ENCODE measurements at regions of chr12 and their contacts with region 1.

Region 1: DNA sequence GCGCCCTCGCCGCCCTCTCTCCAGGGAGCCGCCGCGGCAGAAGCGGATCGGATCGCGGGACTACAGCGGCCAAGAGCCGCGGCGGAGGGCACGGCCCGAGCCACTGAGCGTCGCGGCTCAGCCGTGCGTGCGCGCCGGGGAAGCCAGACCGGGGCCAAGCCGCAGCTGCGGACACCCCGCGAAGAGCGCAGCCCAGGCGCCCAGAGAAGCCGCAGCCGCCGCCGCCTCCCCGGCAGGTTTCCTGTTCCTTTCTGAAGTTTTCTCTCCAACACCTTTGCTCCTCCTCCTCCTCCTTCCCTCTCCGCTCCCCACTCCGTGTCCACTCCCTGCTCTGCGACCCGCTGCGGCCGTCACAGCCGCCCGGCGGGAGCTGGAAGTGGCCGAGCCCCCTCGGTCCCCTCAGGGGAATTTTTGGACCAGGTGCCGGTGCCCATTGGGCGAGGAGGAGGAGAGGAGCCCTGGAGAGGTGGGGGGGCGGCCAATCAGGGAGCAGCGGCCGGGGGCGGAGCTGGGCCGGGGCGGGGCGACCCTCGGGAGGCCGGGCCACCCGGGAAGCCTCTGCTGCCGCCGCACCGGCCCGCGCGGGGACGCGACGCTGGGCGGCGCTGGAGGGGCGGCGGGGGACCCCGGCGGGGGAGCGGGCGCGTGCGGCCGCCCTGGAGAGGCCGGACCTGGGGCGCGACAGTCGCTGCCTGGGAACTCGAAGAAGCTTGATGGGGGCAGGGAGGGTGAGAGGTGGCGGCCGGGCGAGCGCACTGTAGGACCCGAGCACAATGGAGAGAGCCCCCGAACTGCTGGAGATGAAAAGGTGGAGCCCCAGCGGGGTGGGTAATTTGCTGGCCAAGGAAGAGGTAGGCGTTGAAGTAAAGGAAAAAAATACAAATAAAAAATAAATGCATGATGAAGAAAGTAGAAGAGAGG is at the start of gene ITPR2:
- DNase-seq: peak; percentile 97
- ATAC-seq: peak; percentile 91
- H3K4me3 Mint-ChIP-seq: peak within 1 kb of the TSS; percentile 96
- H3K27ac Mint-ChIP-seq: peak within 1 kb of the TSS; percentile 99
- H3K4me1 Mint-ChIP-seq: peaks cover 37% of the 10 kb centered on the region
- H3K27me3 Mint-ChIP-seq: no peaks in the 10 kb centered on the region
- total RNA-seq, gene ITPR2: 27.3 to 28.6 TPM

Region 2: GRCh38 chr12:26113853-26114719 is 719.0 kb before region 1 on chr12:
- CTCF ChIA-PET with region 1: no interaction called
- POLR2A ChIA-PET with region 1: no interaction called
- intact Hi-C with region 1: loop called in 1 of 2 experiments (anchors 2 kb)
- DNase-seq: peak; percentile 87
- ATAC-seq: peak; percentile 88
- H3K4me3 Mint-ChIP-seq: peak overlapping the region; percentile 69
- H3K27ac Mint-ChIP-seq: peak overlapping the region; percentile 25
- H3K4me1 Mint-ChIP-seq: peaks cover 11% of the 10 kb centered on the region
- H3K27me3 Mint-ChIP-seq: peaks cover 37% of the 10 kb centered on the region

Region 3: GRCh38 chr12:26748741-26749431 is 84.2 kb before region 1 on chr12:
- CTCF ChIA-PET with region 1: interaction called, 3 read pairs
- POLR2A ChIA-PET with region 1: interaction called, 11 read pairs
- intact Hi-C with region 1: loop called (anchors 1 to 2 kb)
- DNase-seq: no peak
- ATAC-seq: peak; percentile 70
- H3K4me3 Mint-ChIP-seq: peak overlapping the region; percentile 30
- H3K27ac Mint-ChIP-seq: peak overlapping the region; percentile 83
- H3K4me1 Mint-ChIP-seq: peaks cover 75% of the 10 kb centered on the region
- H3K27me3 Mint-ChIP-seq: no peaks in the 10 kb centered on the region

Region 4: DNA sequence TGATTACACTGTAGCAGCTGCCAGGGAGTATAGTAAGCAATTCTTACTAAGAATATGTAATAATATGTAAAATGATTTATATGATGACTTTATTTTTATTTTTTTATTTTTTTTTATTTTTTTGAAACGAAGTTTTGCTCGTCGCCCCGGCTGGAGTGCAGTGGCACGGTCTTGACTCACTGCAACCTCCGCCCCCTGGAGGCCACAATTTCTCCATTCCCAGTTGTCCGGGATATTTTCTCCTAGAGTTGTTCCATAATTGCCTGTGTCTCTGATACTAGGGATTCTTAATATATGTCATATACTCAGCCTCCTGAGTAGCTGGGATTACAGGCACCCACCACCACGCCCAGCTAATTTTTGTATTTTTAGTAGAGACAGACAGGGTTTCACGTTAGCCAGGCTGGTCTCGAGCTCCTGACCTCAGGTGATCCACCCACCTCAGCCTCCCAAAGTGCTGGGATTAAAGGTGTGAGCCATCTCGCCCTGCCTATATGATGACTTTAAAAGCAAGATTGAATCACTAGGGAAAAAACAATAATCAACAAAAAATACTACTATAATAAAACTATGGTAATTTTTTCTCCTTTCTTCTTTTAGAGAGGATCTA is 12.1 kb after region 1 on chr12:
- CTCF ChIA-PET with region 1: interaction called, 14 read pairs
- POLR2A ChIA-PET with region 1: no interaction called
- intact Hi-C with region 1: no loop called
- DNase-seq: peak; percentile 31
- ATAC-seq: no peak
- H3K4me3 Mint-ChIP-seq: no peak overlapping the region
- H3K27ac Mint-ChIP-seq: no peak overlapping the region
- H3K4me1 Mint-ChIP-seq: peaks cover 15% of the 10 kb centered on the region
- H3K27me3 Mint-ChIP-seq: peaks cover 5% of the 10 kb centered on the region

Region 5: DNA sequence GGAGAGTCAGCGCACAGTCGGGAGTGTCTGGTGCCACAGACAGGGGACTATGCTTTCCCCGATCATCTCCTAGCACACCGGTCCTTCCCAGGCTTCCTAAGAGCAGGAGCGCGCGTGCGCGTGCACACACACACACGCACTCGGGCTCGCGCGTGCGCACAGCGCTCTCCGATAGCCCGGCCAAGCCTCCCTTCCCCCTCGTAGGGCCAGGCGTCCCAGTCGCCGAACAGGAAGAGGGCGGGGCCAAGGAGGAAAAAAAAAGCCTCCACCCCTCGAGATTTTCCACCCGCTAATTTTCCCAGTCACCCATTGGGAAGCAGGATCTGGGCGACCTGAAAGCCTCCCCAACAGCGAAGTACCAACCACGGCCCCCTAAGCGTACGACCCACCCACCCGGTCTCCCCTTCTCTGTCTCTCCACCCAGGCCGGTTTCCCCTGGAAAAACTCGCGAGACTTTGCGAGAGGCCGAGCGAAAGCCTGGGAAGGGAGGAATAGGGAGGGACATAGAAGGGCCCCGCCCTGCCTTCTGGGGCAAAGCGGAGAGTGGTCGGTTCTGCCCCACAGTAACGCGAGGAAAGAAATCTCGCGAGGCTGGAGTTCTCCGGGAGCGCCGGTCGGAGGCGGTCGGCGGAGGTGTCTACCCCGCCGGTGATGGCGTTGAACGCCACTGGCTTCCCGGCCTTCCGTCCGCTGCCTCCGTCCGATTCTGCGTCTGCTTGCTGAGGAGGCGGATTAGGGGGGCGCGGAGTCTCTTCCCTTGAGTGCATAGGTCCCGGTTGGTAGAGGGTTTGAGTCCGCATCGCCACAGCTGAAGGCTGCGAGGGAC is 105.0 kb after region 1 on chr12 and contains the starts of genes FGFR1OP2 and INTS13:
- CTCF ChIA-PET with region 1: no interaction called
- POLR2A ChIA-PET with region 1: no interaction called
- intact Hi-C with region 1: loop called (anchors 1 kb)
- DNase-seq: peak; percentile 99
- ATAC-seq: peak; percentile 92
- H3K4me3 Mint-ChIP-seq: peak within 1 kb of the TSS; percentile 98
- H3K27ac Mint-ChIP-seq: peak within 1 kb of the TSS; percentile 99
- H3K4me1 Mint-ChIP-seq: peaks cover 56% of the 10 kb centered on the region
- H3K27me3 Mint-ChIP-seq: no peaks in the 10 kb centered on the region
- total RNA-seq, gene FGFR1OP2: 38.5 to 43.1 TPM
- total RNA-seq, gene INTS13: 66.3 to 71.5 TPM

Region 6: DNA sequence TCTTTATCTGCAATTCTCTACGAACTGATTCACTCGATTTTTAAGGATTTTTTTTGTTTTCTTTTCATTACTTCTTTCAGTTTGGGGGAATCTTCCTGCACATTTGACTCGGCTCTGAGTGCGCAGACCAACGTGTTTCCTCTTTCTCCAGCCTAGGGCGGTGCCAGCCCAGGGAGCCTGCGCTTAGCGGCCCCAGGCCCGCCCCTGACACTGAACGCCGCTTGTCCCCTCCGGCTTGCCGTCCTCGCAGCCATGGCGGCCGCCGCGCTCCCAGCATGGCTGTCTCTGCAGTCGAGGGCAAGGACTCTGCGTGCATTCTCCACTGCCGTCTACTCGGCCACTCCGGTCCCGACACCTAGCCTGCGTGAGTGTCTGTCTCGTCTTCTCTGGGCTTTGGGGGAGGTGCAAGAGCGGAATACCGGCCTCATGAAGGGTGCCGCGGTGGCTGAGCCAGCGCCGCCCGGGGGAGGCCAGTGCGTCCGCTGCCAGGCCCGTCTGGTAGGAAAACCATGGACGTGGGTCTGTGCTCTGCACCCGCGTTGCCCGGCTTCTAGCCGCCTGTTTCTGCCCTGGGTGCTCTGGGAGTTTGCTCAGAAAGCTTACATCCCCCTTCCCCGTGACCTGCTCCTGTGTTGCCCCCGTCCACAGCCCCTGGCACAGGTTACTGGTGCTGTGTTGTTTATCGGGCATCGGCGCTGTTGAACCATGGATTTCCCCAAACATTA is 877.7 kb after region 1 on chr12 and contains the start of gene MRPS35:
- CTCF ChIA-PET with region 1: no interaction called
- POLR2A ChIA-PET with region 1: no interaction called
- intact Hi-C with region 1: loop called in 1 of 2 experiments (anchors 2 kb)
- DNase-seq: peak; percentile 95
- ATAC-seq: peak; percentile 98
- H3K4me3 Mint-ChIP-seq: peak within 1 kb of the TSS; percentile 94
- H3K27ac Mint-ChIP-seq: peak within 1 kb of the TSS; percentile 94
- H3K4me1 Mint-ChIP-seq: peaks cover 28% of the 10 kb centered on the region
- H3K27me3 Mint-ChIP-seq: no peaks in the 10 kb centered on the region
- total RNA-seq, gene MRPS35: 58.5 to 62.1 TPM